ENCODE measurements at regions of chr7 and their contacts with region 1.

Region 1: DNA sequence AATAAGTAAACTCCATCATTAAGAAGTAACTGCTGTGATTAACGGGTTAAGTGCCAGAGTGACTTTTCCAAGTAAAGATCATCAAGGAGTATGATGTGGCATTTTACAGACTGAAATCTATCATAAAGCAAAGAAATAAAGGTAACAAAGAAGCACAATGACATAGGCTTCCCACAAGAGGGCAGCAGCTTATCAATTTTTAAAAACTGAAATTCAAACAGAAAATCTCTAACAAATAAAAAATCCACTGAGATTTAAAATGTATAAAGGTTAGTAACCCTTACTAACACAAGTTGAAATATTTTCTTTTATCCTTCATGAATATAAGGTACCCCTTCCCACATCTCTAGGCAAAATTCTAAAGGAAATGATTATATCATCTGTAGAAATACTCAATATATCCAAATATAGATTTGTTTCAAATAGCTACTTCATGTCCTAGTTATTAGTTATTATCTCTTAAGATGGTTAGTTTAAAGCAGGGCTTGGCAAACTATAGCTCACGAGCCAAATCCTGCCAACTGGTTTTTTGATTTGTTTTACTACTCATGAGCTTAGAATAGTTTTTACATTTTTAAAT is 29.2 kb downstream of the FAM3C start:
- DNase-seq: peak in 8 of 42 donors; percentile 10 to 56 (median 20)

Region 2: DNA sequence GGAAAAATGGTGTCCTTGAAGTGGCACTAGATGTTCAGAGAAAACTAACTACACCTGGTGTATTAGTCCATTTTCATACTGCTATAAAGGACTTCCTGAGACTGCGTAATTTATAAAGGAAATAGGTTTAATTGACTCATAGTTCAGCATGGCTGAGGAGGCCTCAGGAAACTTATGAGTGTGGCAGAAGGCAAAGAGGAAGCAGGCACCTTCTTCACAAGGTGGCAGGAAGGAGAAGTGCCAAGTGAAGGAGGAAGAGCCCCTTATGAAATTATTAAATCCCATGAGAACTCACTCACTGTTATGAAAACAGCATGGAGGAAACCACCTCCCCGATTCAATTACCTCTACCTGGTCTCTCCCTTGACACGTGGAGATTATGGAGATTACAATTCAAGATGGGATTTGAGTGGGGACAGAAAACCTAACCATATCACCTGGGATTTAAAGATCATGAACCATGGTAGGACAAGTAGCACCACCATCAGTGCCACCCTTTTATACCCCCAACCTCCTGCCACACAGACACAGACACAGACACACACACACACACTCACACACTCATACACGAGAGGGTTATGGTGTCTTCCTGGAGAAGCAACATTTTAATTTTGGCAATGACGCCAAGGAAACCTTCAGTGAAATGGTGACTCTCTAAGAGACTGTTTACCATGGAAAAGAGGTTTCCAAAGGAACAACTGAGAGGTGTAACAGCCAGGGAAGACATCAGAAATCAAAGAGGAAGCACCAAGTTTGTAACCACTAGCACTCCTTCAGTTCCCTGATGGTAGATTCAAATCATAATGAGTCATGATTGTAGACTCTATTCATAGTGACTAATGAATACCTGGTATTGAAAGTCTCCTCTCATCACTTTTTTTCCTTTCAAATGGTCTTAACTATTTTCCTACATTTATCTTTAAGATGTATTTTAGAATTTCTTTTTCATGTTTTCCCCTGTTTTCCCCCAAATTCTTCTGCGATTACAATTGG is 79.9 kb before region 1 on chr7:
- intact Hi-C with region 1: no loop called
- DNase-seq: no peak

Region 3: DNA sequence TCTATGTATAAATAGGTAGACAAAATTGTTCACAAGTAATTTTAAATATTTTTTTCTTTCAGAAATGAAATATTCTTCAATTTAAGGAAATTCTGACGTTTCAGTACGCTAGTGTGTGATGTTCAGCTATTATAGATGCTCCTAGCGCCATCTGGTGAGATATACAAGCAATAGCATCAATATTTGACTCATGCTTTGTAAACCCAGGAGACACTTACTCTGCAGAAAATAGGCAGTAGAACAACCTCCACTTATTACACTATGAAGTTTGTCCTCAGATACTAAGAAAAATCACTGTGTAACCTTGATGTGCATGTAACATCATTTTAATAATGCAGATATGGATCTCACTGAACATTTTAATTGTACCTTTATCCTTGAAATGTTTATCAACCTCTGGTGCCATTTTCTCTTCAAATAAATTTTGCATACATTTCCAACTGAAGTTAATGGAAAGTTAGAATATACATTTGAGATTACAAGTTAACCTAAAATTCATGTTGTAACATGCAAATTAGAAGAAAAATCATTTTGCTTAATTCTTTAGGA is 180.7 kb after region 1 on chr7:
- intact Hi-C with region 1: loop called (anchors 5 kb)
- DNase-seq: peak in 7 of 42 donors; percentile 2 to 50 (median 15)

Measured in head of caudate nucleus (tissue), 42 donors.